ENCODE measurements at regions of chr9 and their contacts with region 1.

Region 1: GRCh38 chr9:128249908-128250838 is 25.6 kb downstream of the GOLGA2 start:
- DNase-seq: peak; percentile 95 to 100 (median 99)
- ATAC-seq: peak; percentile 95
- H3K4me3 ChIP-seq: peak overlapping the region; percentile 52 to 97
- H3K4me3 Mint-ChIP-seq: peak overlapping the region; percentile 86
- H3K27ac ChIP-seq: peak overlapping the region; percentile 52 to 86
- H3K27ac Mint-ChIP-seq: peak overlapping the region; percentile 97
- H3K4me1 ChIP-seq: peaks cover 22% of the 10 kb centered on the region
- H3K4me1 Mint-ChIP-seq: peaks cover 18% of the 10 kb centered on the region
- H3K27me3 ChIP-seq: no peaks in the 10 kb centered on the region
- H3K27me3 Mint-ChIP-seq: peaks cover 5% of the 10 kb centered on the region
- CTCF ChIP-seq: no peak

Region 2: GRCh38 chr9:128191406-128192046 is 58.6 kb before region 1 on chr9 and contains the start of gene CIZ1:
- CTCF ChIA-PET with region 1: interaction called, 5 read pairs
- POLR2A ChIA-PET with region 1: interaction called, 12 read pairs
- intact Hi-C with region 1: loop called in 1 of 2 experiments (anchors 1 kb)
- DNase-seq: peak; percentile 42 to 87 (median 75)
- ATAC-seq: peak; percentile 80
- H3K4me3 ChIP-seq: peak within 1 kb of the TSS; percentile 77 to 78
- H3K4me3 Mint-ChIP-seq: peak within 1 kb of the TSS; percentile 94
- H3K27ac ChIP-seq: peak within 1 kb of the TSS; percentile 58 to 68
- H3K27ac Mint-ChIP-seq: peak within 1 kb of the TSS; percentile 92
- H3K4me1 ChIP-seq: peaks cover 16% of the 10 kb centered on the region
- H3K4me1 Mint-ChIP-seq: peaks cover 35% of the 10 kb centered on the region
- H3K27me3 ChIP-seq: no peaks in the 10 kb centered on the region
- H3K27me3 Mint-ChIP-seq: no peaks in the 10 kb centered on the region
- CTCF ChIP-seq: peak; percentile 65
- total RNA-seq, gene CIZ1: 109 to 116 TPM

Region 3: GRCh38 chr9:128218518-128219389 is 31.4 kb before region 1 on chr9:
- CTCF ChIA-PET with region 1: no interaction called
- POLR2A ChIA-PET with region 1: no interaction called
- intact Hi-C with region 1: loop called (anchors 1 kb)
- DNase-seq: peak; percentile 80 to 94 (median 90)
- ATAC-seq: peak; percentile 96
- H3K4me3 ChIP-seq: peak overlapping the region; percentile 57 to 64
- H3K4me3 Mint-ChIP-seq: peak overlapping the region; percentile 77
- H3K27ac ChIP-seq: no peak overlapping the region
- H3K27ac Mint-ChIP-seq: peak overlapping the region; percentile 19
- H3K4me1 ChIP-seq: peaks cover 14% of the 10 kb centered on the region
- H3K4me1 Mint-ChIP-seq: peaks cover 11% of the 10 kb centered on the region
- H3K27me3 ChIP-seq: no peaks in the 10 kb centered on the region
- H3K27me3 Mint-ChIP-seq: peaks cover 4% of the 10 kb centered on the region
- CTCF ChIP-seq: no peak

Region 4: DNA sequence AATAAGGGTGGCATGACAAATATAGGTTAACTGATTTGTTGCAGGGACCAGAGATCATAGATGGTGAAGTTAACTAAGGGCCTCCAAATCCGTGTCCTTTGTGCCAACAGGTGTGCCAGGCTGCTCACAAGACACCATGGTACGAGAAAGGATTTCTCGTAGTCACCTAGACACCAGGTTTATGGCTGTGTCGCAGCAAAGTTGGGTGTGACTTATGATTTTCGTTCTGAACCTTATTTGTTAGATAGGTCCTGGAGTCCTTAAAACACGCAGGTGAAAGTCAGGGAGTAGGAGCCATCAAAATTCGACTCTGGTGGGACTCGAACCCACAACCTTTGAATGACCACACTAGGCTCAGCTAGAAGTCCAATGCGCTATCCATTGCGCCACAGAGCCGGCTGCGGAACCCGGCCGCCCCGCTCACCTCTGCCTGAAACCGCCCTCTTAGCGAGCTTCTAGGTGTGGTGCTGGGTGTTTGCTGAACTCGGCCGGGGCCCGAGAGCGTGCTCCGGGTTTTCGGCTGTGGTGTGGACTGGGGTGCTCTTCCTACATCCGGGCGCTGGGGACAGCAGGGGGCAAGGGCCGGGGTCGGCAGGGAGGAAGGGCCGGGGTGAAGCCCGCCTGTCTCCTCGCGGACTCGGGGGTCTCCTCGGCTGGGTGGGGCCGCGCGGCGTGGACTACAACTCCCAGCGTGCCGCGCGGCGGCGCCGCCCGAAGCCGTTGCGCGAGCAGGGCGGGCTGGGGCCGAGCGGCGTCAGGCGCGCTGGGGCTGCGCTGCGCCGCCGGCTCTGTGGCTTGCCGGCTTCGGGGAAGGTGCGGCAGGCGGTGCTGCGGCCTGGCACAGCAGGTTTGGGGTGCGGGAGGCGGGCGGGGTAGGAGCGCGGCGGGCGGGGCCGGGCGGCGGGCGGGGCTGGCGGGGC is 89.9 kb after region 1 on chr9 and contains the start of gene SLC27A4:
- CTCF ChIA-PET with region 1: no interaction called
- POLR2A ChIA-PET with region 1: no interaction called
- intact Hi-C with region 1: loop called in 1 of 2 experiments (anchors 1 kb)
- DNase-seq: peak; percentile 52 to 92 (median 76)
- ATAC-seq: peak; percentile 92
- H3K4me3 ChIP-seq: peak within 1 kb of the TSS; percentile 73 to 83
- H3K4me3 Mint-ChIP-seq: peak within 1 kb of the TSS; percentile 96
- H3K27ac ChIP-seq: peak within 1 kb of the TSS; percentile 40 to 53
- H3K27ac Mint-ChIP-seq: peak within 1 kb of the TSS; percentile 85
- H3K4me1 ChIP-seq: peaks cover 14% of the 10 kb centered on the region
- H3K4me1 Mint-ChIP-seq: peaks cover 8% of the 10 kb centered on the region
- H3K27me3 ChIP-seq: no peaks in the 10 kb centered on the region
- H3K27me3 Mint-ChIP-seq: no peaks in the 10 kb centered on the region
- CTCF ChIP-seq: no peak
- total RNA-seq, gene SLC27A4: 2.2 to 2.4 TPM

Region 5: GRCh38 chr9:129028192-129028957 is 778.2 kb after region 1 on chr9 and contains the start of gene SH3GLB2:
- CTCF ChIA-PET with region 1: no interaction called
- POLR2A ChIA-PET with region 1: no interaction called
- intact Hi-C with region 1: loop called in 1 of 2 experiments (anchors 5 kb)
- DNase-seq: peak; percentile 88 to 97 (median 94)
- ATAC-seq: peak; percentile 92
- H3K4me3 ChIP-seq: peak within 1 kb of the TSS; percentile 51 to 61
- H3K4me3 Mint-ChIP-seq: peak within 1 kb of the TSS; percentile 83
- H3K27ac ChIP-seq: peak within 1 kb of the TSS; percentile 40 to 62
- H3K27ac Mint-ChIP-seq: peak within 1 kb of the TSS; percentile 64
- H3K4me1 ChIP-seq: peaks cover 13% of the 10 kb centered on the region
- H3K4me1 Mint-ChIP-seq: peaks cover 24% of the 10 kb centered on the region
- H3K27me3 ChIP-seq: no peaks in the 10 kb centered on the region
- H3K27me3 Mint-ChIP-seq: no peaks in the 10 kb centered on the region
- CTCF ChIP-seq: no peak
- total RNA-seq, gene SH3GLB2: 64.9 to 68.3 TPM